Dendritic cell treated with granulocyte-macrophage colony-stimulating factor and Interleukin-4, amounts not matched to agents 40 ng/mL and 50 ng/mL, for 4 days (primary cell): ENCODE measurements at regions of chr5 and their contacts with region 1.

Region 1: GRCh38 chr5:149549461-149550267 is 1.6 kb downstream of the CSNK1A1 start:
- H3K4me3 Mint-ChIP-seq: peak overlapping the region; percentile 94
- H3K27ac Mint-ChIP-seq: peak overlapping the region; percentile 99
- H3K4me1 Mint-ChIP-seq: peaks cover 47% of the 10 kb centered on the region
- H3K27me3 Mint-ChIP-seq: no peaks in the 10 kb centered on the region

Region 2: GRCh38 chr5:149466457-149466972 is 83.1 kb before region 1 on chr5:
- intact Hi-C with region 1: no loop called
- H3K4me3 Mint-ChIP-seq: no peak overlapping the region
- H3K27ac Mint-ChIP-seq: no peak overlapping the region
- H3K4me1 Mint-ChIP-seq: peaks cover 6% of the 10 kb centered on the region
- H3K27me3 Mint-ChIP-seq: peaks cover 1% of the 10 kb centered on the region

Region 3: DNA sequence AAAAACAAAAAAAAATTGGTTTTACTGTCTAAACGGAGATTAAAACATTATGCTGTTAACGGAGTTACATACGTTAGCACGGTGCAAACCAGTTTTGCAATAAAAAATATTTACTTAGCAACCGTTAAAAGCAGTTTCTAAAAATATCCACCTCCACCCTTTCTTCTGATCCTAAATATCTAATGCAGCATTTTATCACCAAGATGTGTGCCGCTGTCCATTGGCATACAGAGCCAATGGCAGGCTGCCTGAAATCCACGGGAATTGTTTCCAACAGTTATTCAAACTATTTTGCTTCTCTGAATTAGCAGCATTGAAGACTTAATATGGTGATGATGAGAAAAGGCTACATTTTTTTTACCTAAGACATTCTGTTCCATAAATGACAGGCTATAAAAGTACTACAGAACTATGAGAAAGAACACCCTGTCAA is 60.0 kb before region 1 on chr5:
- intact Hi-C with region 1: loop called (anchors 10 kb)
- H3K4me3 Mint-ChIP-seq: no peak overlapping the region
- H3K27ac Mint-ChIP-seq: no peak overlapping the region
- H3K4me1 Mint-ChIP-seq: no peaks in the 10 kb centered on the region
- H3K27me3 Mint-ChIP-seq: peaks cover 3% of the 10 kb centered on the region